Heart left ventricle (tissue), 16 donors: ENCODE measurements at regions of chr14 and their contacts with region 1.

Region 1: DNA sequence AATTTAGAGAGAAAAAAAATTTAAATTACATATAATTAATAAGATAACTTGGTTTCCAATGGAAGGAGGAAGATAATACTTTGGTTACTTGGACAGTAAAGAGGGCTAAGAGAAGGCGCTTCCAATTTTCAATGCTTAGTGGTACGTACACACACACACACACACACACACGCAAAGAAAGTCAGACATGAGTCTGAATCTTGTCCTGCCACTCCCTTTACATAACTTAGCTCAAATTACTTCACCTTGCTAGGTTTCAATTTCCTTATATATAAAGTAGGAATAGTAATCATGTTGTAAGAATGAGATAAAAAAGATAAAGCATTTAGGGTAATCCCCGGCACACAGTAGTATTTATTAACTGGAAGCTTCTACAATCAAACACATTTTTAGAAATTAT is 39.7 kb upstream of the VCPKMT start:
- DNase-seq: no peak
- ATAC-seq: no peak
- H3K4me3 ChIP-seq: no peak overlapping the region
- H3K27ac ChIP-seq: no peak overlapping the region
- H3K4me1 ChIP-seq: no peaks in the 10 kb centered on the region
- H3K27me3 ChIP-seq: no peaks in the 10 kb centered on the region
- CTCF ChIP-seq: no peak
- POLR2A ChIP-seq: no peak

Region 2: DNA sequence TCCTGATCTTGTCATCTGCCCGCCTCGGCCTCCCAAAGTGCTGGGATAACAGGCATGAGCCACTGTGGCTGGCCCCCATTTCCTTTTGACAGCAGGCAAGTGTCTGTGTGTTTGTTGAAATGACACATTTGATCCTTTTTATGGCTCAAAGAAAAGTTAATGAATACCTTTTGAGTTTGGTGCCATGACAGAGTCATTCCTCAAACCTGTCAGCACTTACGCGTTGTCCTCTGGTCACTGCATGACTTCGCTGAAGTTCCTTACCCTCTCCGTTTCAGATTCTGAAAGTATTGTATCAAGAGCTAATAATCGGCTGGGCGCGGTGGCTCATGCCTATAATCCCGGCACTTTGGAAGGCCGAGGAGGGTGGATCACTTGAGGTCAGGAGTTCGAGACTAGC is 335.9 kb before region 1 on chr14:
- intact Hi-C with region 1: no loop called
- DNase-seq: no peak
- ATAC-seq: no peak
- H3K4me3 ChIP-seq: no peak overlapping the region
- H3K27ac ChIP-seq: no peak overlapping the region
- H3K4me1 ChIP-seq: no peaks in the 10 kb centered on the region
- H3K27me3 ChIP-seq: no peaks in the 10 kb centered on the region
- CTCF ChIP-seq: no peak
- POLR2A ChIP-seq: no peak

Region 3: DNA sequence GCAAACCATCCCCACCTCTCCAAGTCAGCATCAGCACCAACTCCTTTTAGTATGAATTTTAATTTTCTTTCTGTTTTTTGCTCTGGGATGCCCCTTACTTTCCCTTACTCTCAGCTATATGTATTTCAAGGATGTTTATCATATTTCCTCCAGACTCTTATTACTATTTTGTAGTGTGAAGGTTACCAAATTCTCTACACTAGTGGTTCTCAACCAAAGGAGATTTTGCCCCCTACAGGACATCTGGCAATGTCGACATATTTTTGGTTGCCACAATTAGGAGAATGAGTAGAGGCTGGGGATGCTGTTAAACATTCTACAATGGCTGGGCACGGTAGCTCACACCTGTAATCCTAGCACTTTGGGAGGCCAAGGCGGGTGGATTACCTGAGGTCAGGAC is 104.4 kb after region 1 on chr14:
- intact Hi-C with region 1: loop called in 2 of 10 experiments (anchors 10 kb)
- DNase-seq: no peak
- ATAC-seq: peak in 1 of 4 donors; percentile 60
- H3K4me3 ChIP-seq: no peak overlapping the region
- H3K27ac ChIP-seq: no peak overlapping the region
- H3K4me1 ChIP-seq: peaks cover 0 to 4% (median 0%) of the 10 kb centered on the region in 12 donors
- H3K27me3 ChIP-seq: no peaks in the 10 kb centered on the region
- CTCF ChIP-seq: peak; percentile 18 to 59 (median 44)
- POLR2A ChIP-seq: no peak

Region 4: GRCh38 chr14:50342221-50343078 is 186.3 kb after region 1 on chr14:
- intact Hi-C with region 1: loop called in 1 of 10 experiments (anchors 5 kb)
- DNase-seq: peak; percentile 58 to 64 (median 62)
- ATAC-seq: peak; percentile 85 to 95 (median 93)
- H3K4me3 ChIP-seq: peak overlapping the region in 9 of 12 donors; percentile 3 to 38 (median 26)
- H3K27ac ChIP-seq: peak overlapping the region; percentile 18 to 77 (median 49)
- H3K4me1 ChIP-seq: peaks cover 0 to 38% (median 22%) of the 10 kb centered on the region in 12 donors
- H3K27me3 ChIP-seq: no peaks in the 10 kb centered on the region
- CTCF ChIP-seq: peak in 11 of 12 donors; percentile 19 to 64 (median 38)
- POLR2A ChIP-seq: no peak

Region 5: DNA sequence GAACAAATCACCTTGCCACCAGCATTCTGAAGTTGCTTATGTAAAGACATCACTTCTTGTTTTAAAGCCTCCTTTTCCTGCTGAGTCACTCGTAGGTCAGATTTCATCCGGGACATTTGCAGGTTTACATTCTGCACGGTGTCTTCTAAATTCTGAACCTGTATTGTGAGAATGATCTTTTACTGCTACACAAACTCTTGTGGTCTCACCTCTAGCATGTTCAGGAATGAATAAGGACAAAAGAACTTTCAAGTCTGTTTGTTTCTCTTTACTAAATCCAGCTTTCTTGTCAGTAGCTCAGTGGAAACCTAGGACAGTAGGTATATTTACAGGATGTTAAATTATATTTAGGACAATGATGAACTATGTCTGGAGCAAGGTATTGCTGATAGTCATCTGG is 585.5 kb after region 1 on chr14:
- intact Hi-C with region 1: loop called in 1 of 10 experiments (anchors 10 kb)
- DNase-seq: no peak
- ATAC-seq: no peak
- H3K4me3 ChIP-seq: no peak overlapping the region
- H3K27ac ChIP-seq: no peak overlapping the region
- H3K4me1 ChIP-seq: peaks cover 0 to 31% (median 13%) of the 10 kb centered on the region in 12 donors
- H3K27me3 ChIP-seq: no peaks in the 10 kb centered on the region
- CTCF ChIP-seq: no peak
- POLR2A ChIP-seq: no peak